Panc1 (cell line): ENCODE measurements at regions of chr20 and their contacts with region 1.

Region 1: GRCh38 chr20:51372176-51372803 is 170.2 kb downstream of the NFATC2 start:
- DNase-seq: no peak
- ATAC-seq: peak; percentile 99
- H3K4me3 ChIP-seq: no peak overlapping the region
- H3K27ac ChIP-seq: no peak overlapping the region
- H3K4me1 ChIP-seq: no peaks in the 10 kb centered on the region
- H3K27me3 ChIP-seq: no peaks in the 10 kb centered on the region
- CTCF ChIP-seq: peak; percentile 93

Region 2: GRCh38 chr20:51412333-51412871 is 40.1 kb after region 1 on chr20:
- CTCF ChIA-PET with region 1: no interaction called
- POLR2A ChIA-PET with region 1: no interaction called
- in situ Hi-C with region 1: no loop called
- intact Hi-C with region 1: no loop called
- DNase-seq: no peak
- ATAC-seq: peak; percentile 87
- H3K4me3 ChIP-seq: peak overlapping the region in 1 of 2 experiments; percentile 36; a peak in 1 of 4 replicates
- H3K27ac ChIP-seq: peak overlapping the region; percentile 60
- H3K4me1 ChIP-seq: peaks cover 14% of the 10 kb centered on the region
- H3K27me3 ChIP-seq: no peaks in the 10 kb centered on the region
- CTCF ChIP-seq: no peak

Region 3: DNA sequence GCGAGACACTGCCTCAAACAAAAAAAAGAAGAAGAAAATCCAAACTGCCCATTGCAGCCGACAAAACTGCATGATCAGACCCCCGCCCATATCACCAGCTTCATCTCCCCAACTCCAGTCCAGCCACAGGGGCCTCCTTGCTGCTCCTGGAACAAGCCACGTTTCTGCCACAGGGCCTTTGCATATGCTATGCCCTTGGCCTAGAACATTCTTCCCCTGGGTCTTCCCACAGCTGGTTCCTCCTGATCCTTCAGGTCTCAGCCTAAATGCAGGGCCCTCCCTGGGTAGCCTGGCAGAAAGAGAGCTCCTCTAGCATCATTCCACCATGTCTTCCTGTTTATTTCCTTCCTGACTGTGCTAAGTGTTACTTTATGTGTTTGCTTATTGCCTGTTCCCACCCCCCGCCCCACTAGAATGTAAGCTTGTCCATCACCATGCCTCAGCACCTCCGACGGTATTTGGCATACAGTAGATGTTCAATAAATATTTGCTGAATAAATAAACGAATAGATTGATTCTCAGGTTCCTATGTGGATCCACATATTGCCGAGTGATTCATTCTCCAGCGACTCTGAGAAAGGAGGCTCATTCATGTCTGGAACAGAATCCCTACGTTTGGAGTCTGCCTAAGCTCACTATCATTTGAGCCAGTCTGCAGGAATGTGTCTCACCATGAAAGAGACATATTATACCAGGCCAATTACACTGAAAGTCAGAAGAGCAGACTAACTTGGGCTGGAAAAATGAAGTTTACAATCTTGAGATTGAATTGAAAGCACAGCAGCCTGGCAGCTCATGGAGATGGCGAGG is 114.1 kb after region 1 on chr20:
- CTCF ChIA-PET with region 1: interaction called, 15 read pairs
- POLR2A ChIA-PET with region 1: no interaction called
- in situ Hi-C with region 1: no loop called
- intact Hi-C with region 1: no loop called
- DNase-seq: no peak
- ATAC-seq: no peak
- H3K4me3 ChIP-seq: no peak overlapping the region
- H3K27ac ChIP-seq: peak overlapping the region; percentile 49; the same call in 1 of the 2 replicates
- H3K4me1 ChIP-seq: peaks cover 11% of the 10 kb centered on the region
- H3K27me3 ChIP-seq: no peaks in the 10 kb centered on the region
- CTCF ChIP-seq: no peak

Region 4: DNA sequence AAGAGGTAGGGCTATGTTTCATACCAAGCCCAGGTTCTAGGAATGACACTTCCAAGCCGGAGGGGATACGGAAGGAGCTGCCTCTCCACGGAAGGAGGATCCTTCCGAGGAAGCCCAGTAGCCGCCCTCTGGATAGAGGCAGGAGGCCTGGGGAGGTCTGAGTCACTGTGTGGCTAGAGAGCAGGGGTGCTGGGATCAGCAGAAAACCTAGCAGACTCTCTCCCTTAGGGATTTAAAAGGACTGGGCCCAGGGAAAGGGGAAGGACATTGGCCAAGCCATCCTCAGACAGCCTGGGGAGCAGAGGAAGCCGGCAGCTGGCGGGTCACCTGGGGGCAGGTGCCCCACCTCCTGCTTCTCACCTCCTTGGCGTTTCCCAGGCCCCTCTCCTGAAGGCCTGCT is 206.8 kb after region 1 on chr20:
- CTCF ChIA-PET with region 1: no interaction called
- POLR2A ChIA-PET with region 1: no interaction called
- in situ Hi-C with region 1: no loop called
- intact Hi-C with region 1: no loop called
- DNase-seq: no peak
- ATAC-seq: no peak
- H3K4me3 ChIP-seq: no peak overlapping the region
- H3K27ac ChIP-seq: no peak overlapping the region
- H3K4me1 ChIP-seq: no peaks in the 10 kb centered on the region
- H3K27me3 ChIP-seq: no peaks in the 10 kb centered on the region
- CTCF ChIP-seq: no peak

Region 5: GRCh38 chr20:51624157-51624731 is 252.0 kb after region 1 on chr20:
- CTCF ChIA-PET with region 1: no interaction called
- POLR2A ChIA-PET with region 1: no interaction called
- in situ Hi-C with region 1: no loop called
- intact Hi-C with region 1: loop called (anchors 1 kb)
- DNase-seq: no peak
- ATAC-seq: peak; percentile 85
- H3K4me3 ChIP-seq: no peak overlapping the region
- H3K27ac ChIP-seq: no peak overlapping the region
- H3K4me1 ChIP-seq: no peaks in the 10 kb centered on the region
- H3K27me3 ChIP-seq: no peaks in the 10 kb centered on the region
- CTCF ChIP-seq: peak; percentile 91